Caco-2 (cell line): ENCODE measurements at regions of chr20 and their contacts with region 1.

Region 1: DNA sequence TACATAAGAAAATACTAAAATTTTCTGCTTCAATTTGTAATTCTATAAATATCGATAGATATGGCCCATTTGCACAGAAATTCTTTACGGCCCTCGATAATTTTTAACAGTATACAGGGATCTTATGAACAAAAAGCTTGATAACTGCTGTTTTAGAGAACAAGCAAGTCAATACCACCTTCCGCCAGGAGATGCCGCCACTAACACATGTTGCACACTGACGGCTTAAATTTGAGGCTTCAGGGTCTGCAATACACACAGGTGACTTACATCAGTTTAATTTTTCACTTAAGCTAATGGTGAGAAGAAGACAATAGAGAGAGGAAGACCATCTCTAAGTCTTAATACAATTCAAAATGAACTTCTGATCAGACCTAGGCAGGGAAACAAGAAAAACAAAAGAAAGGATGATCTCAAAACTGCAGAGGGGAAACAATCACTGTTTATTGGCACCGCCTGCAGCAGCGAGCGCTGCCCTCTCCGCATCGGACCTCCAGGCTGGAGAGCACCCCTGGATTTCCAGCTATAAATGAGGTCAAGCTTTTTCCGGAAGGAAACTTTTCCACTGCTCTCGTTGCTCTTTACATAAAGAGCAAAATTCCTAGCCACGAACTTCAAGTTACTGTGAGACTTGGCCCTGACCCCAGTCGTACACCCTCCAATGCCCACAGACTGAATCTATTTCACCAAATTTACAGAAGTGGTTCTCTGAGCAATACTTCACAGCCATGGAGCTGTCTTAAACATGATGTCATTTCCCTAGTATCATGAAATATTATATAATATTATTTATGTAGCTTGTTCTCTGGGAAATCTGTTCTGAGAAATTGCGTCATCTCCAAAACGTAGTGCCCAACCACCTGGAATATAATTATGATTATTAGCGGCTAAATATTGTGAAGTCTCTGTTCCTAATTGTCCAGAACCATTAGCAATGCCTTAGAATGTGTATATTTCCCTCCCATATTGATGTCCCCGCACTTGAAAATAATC is 54.1 kb downstream of the OTOR start:
- DNase-seq: peak; percentile 70 to 78
- H3K4me3 ChIP-seq: no peak overlapping the region
- H3K4me3 Mint-ChIP-seq: no peak overlapping the region
- H3K27ac Mint-ChIP-seq: no peak overlapping the region
- H3K4me1 ChIP-seq: no peaks in the 10 kb centered on the region
- H3K4me1 Mint-ChIP-seq: no peaks in the 10 kb centered on the region
- H3K27me3 ChIP-seq: 0 out of 2 replicates have a peak, but pooled peaks cover 2% of the 10 kb centered on the region
- H3K27me3 Mint-ChIP-seq: peaks cover 24% of the 10 kb centered on the region
- CTCF ChIP-seq: peak; percentile 88 to 90

Region 2: DNA sequence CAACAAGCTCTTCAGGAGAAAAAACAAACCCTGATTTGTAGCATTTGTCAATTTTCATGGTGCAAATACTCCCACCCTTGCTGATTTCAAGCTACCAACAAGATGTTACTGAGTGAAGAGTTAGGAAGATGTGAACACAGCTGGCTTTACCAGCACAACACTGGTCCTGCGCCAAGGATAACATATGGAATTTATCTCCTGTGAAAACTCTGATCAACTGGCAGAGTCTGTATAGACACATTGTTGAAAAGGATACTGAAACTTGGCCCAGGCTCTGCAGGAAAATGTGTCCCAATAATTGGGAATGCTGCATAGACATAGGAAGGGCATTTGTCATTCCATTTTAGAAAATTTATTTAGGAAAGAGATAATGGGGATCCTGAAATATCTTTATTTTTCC is 25.1 kb before region 1 on chr20:
- CTCF ChIA-PET with region 1: no interaction called
- POLR2A ChIA-PET with region 1: no interaction called
- intact Hi-C with region 1: no loop called
- DNase-seq: no peak
- H3K4me3 ChIP-seq: no peak overlapping the region
- H3K4me3 Mint-ChIP-seq: no peak overlapping the region
- H3K27ac Mint-ChIP-seq: no peak overlapping the region
- H3K4me1 ChIP-seq: no peaks in the 10 kb centered on the region
- H3K4me1 Mint-ChIP-seq: no peaks in the 10 kb centered on the region
- H3K27me3 ChIP-seq: no peaks in the 10 kb centered on the region; the same call in 1 of the 2 replicates
- H3K27me3 Mint-ChIP-seq: peaks cover 10% of the 10 kb centered on the region
- CTCF ChIP-seq: no peak

Region 3: GRCh38 chr20:16821211-16822089 is 19.2 kb after region 1 on chr20:
- CTCF ChIA-PET with region 1: interaction called, 36 read pairs
- POLR2A ChIA-PET with region 1: no interaction called
- intact Hi-C with region 1: loop called (anchors 1 kb)
- DNase-seq: peak; percentile 41 to 49
- H3K4me3 ChIP-seq: no peak overlapping the region
- H3K4me3 Mint-ChIP-seq: no peak overlapping the region
- H3K27ac Mint-ChIP-seq: no peak overlapping the region
- H3K4me1 ChIP-seq: no peaks in the 10 kb centered on the region
- H3K4me1 Mint-ChIP-seq: no peaks in the 10 kb centered on the region
- H3K27me3 ChIP-seq: peaks cover 2% of the 10 kb centered on the region; the same call in 1 of the 2 replicates
- H3K27me3 Mint-ChIP-seq: peaks cover 15% of the 10 kb centered on the region
- CTCF ChIP-seq: peak; percentile 81 to 88

Region 4: DNA sequence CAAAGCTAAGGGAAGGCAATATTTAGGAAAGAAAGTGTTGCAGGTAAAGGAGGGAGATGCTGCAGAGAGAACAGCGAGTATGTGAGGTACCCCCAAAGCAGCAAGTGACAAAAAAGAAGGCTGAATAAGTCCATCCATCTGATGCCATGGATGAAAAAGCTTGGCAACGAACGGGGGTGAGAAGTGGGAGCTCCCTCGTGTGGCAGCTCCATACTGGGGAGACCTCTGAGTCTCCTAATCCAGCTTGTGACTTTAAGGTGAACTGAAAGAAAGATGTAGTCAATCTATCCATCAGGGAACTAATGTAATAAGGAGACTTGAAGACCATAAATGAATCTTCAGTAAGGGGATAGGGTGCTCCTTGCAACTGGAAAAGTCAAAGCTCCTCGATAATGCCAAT is 102.5 kb after region 1 on chr20:
- CTCF ChIA-PET with region 1: interaction called, 19 read pairs
- POLR2A ChIA-PET with region 1: no interaction called
- intact Hi-C with region 1: loop called (anchors 1 kb)
- DNase-seq: peak in 1 of 2 experiments; percentile 10
- H3K4me3 ChIP-seq: no peak overlapping the region
- H3K4me3 Mint-ChIP-seq: no peak overlapping the region
- H3K27ac Mint-ChIP-seq: no peak overlapping the region
- H3K4me1 ChIP-seq: no peaks in the 10 kb centered on the region
- H3K4me1 Mint-ChIP-seq: no peaks in the 10 kb centered on the region
- H3K27me3 ChIP-seq: no peaks in the 10 kb centered on the region; the same call in 1 of the 2 replicates
- H3K27me3 Mint-ChIP-seq: peaks cover 3% of the 10 kb centered on the region
- CTCF ChIP-seq: peak in 1 of 2 experiments; percentile 55

Region 5: GRCh38 chr20:17281478-17281877 is 479.3 kb after region 1 on chr20:
- CTCF ChIA-PET with region 1: no interaction called
- POLR2A ChIA-PET with region 1: no interaction called
- intact Hi-C with region 1: loop called (anchors 1 kb)
- DNase-seq: peak; percentile 50
- H3K4me3 ChIP-seq: no peak overlapping the region
- H3K4me3 Mint-ChIP-seq: no peak overlapping the region
- H3K27ac Mint-ChIP-seq: no peak overlapping the region
- H3K4me1 ChIP-seq: no peaks in the 10 kb centered on the region
- H3K4me1 Mint-ChIP-seq: no peaks in the 10 kb centered on the region
- H3K27me3 ChIP-seq: peaks cover 2% of the 10 kb centered on the region; the same call in 1 of the 2 replicates
- H3K27me3 Mint-ChIP-seq: peaks cover 12% of the 10 kb centered on the region
- CTCF ChIP-seq: peak; percentile 37 to 39

Region 6: GRCh38 chr20:17431621-17432364 is 629.6 kb after region 1 on chr20:
- CTCF ChIA-PET with region 1: interaction called, 15 read pairs
- POLR2A ChIA-PET with region 1: no interaction called
- intact Hi-C with region 1: loop called (anchors 1 kb)
- DNase-seq: peak in 1 of 2 experiments; percentile 69
- H3K4me3 ChIP-seq: no peak overlapping the region
- H3K4me3 Mint-ChIP-seq: no peak overlapping the region
- H3K27ac Mint-ChIP-seq: no peak overlapping the region
- H3K4me1 ChIP-seq: peaks cover 9% of the 10 kb centered on the region
- H3K4me1 Mint-ChIP-seq: peaks cover 15% of the 10 kb centered on the region
- H3K27me3 ChIP-seq: no peaks in the 10 kb centered on the region
- H3K27me3 Mint-ChIP-seq: no peaks in the 10 kb centered on the region
- CTCF ChIP-seq: peak; percentile 88 to 92

Region 7: GRCh38 chr20:17604852-17605660 is 802.8 kb after region 1 on chr20:
- CTCF ChIA-PET with region 1: no interaction called
- POLR2A ChIA-PET with region 1: no interaction called
- intact Hi-C with region 1: loop called (anchors 10 kb)
- DNase-seq: peak; percentile 37 to 60
- H3K4me3 ChIP-seq: no peak overlapping the region
- H3K4me3 Mint-ChIP-seq: peak overlapping the region; percentile 19
- H3K27ac Mint-ChIP-seq: peak overlapping the region; percentile 40
- H3K4me1 ChIP-seq: peaks cover 36% of the 10 kb centered on the region
- H3K4me1 Mint-ChIP-seq: peaks cover 37% of the 10 kb centered on the region
- H3K27me3 ChIP-seq: no peaks in the 10 kb centered on the region
- H3K27me3 Mint-ChIP-seq: no peaks in the 10 kb centered on the region
- CTCF ChIP-seq: no peak